GM12878 (cell line): ENCODE measurements at regions of chr4 and their contacts with region 1.

Region 1: DNA sequence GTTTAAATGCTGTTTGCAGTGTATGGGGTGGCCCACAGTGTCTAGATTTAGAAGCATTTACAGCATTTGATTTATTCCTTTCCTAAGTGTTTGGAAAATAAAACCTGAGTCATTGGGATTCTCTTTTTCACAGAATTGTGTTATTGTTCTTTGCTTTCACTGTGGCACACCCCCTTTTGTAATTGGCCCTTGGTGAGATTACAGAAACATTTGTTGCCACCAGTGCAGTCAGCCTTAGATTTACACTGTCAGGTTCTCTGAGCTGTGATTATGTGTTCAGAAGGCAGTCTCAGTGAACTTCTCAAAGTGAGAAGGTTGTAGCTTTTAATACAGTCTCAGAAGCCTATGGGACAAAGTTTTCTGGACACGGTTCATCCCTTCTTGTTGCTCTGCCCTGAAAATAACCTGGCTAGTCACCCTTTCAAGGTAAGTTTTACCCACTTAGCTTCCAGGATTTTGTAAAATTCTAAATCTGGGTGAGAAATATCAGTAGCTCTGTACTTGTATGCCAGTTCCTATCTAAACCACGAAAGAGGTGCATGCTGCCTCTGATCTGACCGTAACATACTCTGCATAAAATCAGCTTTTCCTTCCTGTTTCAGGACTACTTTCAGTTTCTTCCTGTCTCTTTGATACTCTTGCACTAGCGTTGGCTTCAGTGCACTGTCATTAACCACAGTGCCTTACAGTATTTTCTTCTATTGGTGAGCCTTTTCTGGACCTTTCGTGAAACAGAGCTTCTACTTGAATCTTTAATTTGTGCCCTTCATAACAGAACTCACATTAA is 12.6 kb downstream of the RUFY3 start:
- DNase-seq: peak; percentile 74
- ATAC-seq: peak; percentile 92
- H3K4me3 ChIP-seq: peak overlapping the region; percentile 62
- H3K27ac ChIP-seq: peak overlapping the region; percentile 49
- H3K4me1 ChIP-seq: peaks cover 30% of the 10 kb centered on the region
- H3K27me3 ChIP-seq: no peaks in the 10 kb centered on the region
- CTCF ChIP-seq: no peak
- EP300 ChIP-seq: 0 out of 4 replicates have a peak, but pooled peaks have one; percentile 1 to 14
- POLR2A ChIP-seq: no peak; the same call in 1 of the 2 replicates
- RAD21 ChIP-seq: no peak

Region 2: GRCh38 chr4:70687821-70688794 is 46.3 kb before region 1 on chr4 and contains the start of gene UTP3:
- CTCF ChIA-PET with region 1: interaction called, 58 read pairs
- POLR2A ChIA-PET with region 1: interaction called, 6 read pairs
- RAD21 ChIA-PET with region 1: interaction called, 40 read pairs
- SMC1A ChIA-PET with region 1: interaction called, 84 read pairs
- in situ Hi-C with region 1: no loop called
- intact Hi-C with region 1: no loop called
- DNase-seq: peak; percentile 95
- ATAC-seq: peak; percentile 93
- H3K4me3 ChIP-seq: peak within 1 kb of the TSS; percentile 90
- H3K27ac ChIP-seq: peak within 1 kb of the TSS; percentile 94
- H3K4me1 ChIP-seq: peaks cover 3% of the 10 kb centered on the region; the same call in 1 of the 2 replicates
- H3K27me3 ChIP-seq: no peaks in the 10 kb centered on the region
- CTCF ChIP-seq: peak; percentile 94 to 100 (median 97)
- EP300 ChIP-seq: no peak; a peak in 1 of 4 replicates
- POLR2A ChIP-seq: peak; percentile 89
- RAD21 ChIP-seq: peak; percentile 75
- polyA plus RNA-seq, gene UTP3: 15.8 to 21.1 TPM

Region 3: GRCh38 chr4:70721747-70722146 is 12.6 kb before region 1 on chr4 and contains the start of gene RUFY3:
- CTCF ChIA-PET with region 1: interaction called, 35 read pairs
- POLR2A ChIA-PET with region 1: interaction called, 6 read pairs
- RAD21 ChIA-PET with region 1: interaction called, 25 read pairs
- SMC1A ChIA-PET with region 1: interaction called, 65 read pairs
- in situ Hi-C with region 1: no loop called
- intact Hi-C with region 1: no loop called
- DNase-seq: no peak
- ATAC-seq: 0 out of 3 replicates have a peak, but pooled peaks have one; percentile 19
- H3K4me3 ChIP-seq: no peak within 1 kb of the TSS
- H3K27ac ChIP-seq: no peak within 1 kb of the TSS
- H3K4me1 ChIP-seq: no peaks in the 10 kb centered on the region
- H3K27me3 ChIP-seq: no peaks in the 10 kb centered on the region; a peak in 1 of 4 replicates
- CTCF ChIP-seq: no peak
- EP300 ChIP-seq: no peak
- POLR2A ChIP-seq: no peak
- RAD21 ChIP-seq: no peak
- polyA plus RNA-seq, gene RUFY3: 6.5 to 7.3 TPM

Region 4: DNA sequence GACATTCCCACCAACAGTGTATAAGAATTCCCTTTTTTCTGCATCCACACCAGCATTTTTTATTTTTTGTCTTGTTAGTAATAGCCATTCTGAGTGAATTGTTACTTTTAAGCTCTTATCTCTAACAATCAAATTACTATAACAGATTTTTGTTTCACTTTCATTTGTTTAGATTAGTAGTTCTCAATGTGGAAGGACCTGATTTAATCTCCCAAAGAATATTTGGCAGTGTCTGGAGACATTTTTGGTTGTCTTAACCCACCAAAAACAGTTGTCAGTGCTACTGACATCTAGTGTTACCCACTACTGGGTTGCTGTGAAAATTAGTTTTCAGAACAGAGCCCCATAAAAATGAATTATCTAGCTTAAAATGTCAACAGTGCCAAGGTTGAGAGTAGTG is 25.3 kb after region 1 on chr4:
- CTCF ChIA-PET with region 1: interaction called, 55 read pairs
- POLR2A ChIA-PET with region 1: interaction called, 24 read pairs
- RAD21 ChIA-PET with region 1: interaction called, 86 read pairs
- SMC1A ChIA-PET with region 1: interaction called, 204 read pairs
- in situ Hi-C with region 1: no loop called
- intact Hi-C with region 1: loop called (anchors 2 kb)
- DNase-seq: no peak
- ATAC-seq: no peak
- H3K4me3 ChIP-seq: no peak overlapping the region
- H3K27ac ChIP-seq: no peak overlapping the region
- H3K4me1 ChIP-seq: peaks cover 10% of the 10 kb centered on the region
- H3K27me3 ChIP-seq: no peaks in the 10 kb centered on the region
- CTCF ChIP-seq: no peak
- EP300 ChIP-seq: no peak
- POLR2A ChIP-seq: no peak
- RAD21 ChIP-seq: no peak

Region 5: DNA sequence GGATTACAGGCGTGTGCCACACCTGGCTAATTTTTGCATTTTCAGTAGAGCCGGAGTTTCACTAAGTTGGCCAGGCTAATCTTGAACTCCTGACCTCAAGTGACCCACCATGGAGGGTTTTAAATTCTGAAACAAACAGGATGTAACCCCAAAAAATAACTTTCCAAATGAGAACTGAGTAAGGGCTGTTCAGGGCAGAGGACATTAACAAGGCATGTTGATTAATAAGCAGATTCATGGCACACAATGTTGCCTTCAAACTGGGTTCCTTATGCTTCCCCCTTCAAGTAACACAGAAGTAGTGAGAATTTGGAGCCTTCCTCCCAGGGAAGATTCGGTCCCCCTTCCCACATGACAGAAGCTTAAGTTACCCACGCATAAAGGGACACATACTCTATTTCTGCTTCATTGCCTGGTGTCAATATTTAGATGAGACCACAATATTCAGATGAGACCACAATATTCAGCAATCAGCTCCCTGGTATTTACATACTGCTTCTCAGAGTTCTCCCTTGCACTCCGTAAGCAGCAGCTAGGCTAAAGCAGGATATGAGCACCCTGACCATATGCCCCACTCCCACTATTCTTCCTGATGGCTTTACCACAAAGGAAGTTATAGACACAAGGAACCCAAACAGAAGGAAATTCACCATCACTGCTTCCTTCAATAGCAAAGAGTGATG is 84.0 kb after region 1 on chr4:
- CTCF ChIA-PET with region 1: interaction called, 4 read pairs
- POLR2A ChIA-PET with region 1: interaction called, 3 read pairs
- RAD21 ChIA-PET with region 1: interaction called, 4 read pairs
- SMC1A ChIA-PET with region 1: interaction called, 11 read pairs
- in situ Hi-C with region 1: no loop called
- intact Hi-C with region 1: no loop called
- DNase-seq: no peak
- ATAC-seq: peak; percentile 57
- H3K4me3 ChIP-seq: no peak overlapping the region
- H3K27ac ChIP-seq: no peak overlapping the region
- H3K4me1 ChIP-seq: peaks cover 16% of the 10 kb centered on the region
- H3K27me3 ChIP-seq: no peaks in the 10 kb centered on the region
- CTCF ChIP-seq: no peak
- EP300 ChIP-seq: no peak
- POLR2A ChIP-seq: no peak
- RAD21 ChIP-seq: no peak

Region 6: DNA sequence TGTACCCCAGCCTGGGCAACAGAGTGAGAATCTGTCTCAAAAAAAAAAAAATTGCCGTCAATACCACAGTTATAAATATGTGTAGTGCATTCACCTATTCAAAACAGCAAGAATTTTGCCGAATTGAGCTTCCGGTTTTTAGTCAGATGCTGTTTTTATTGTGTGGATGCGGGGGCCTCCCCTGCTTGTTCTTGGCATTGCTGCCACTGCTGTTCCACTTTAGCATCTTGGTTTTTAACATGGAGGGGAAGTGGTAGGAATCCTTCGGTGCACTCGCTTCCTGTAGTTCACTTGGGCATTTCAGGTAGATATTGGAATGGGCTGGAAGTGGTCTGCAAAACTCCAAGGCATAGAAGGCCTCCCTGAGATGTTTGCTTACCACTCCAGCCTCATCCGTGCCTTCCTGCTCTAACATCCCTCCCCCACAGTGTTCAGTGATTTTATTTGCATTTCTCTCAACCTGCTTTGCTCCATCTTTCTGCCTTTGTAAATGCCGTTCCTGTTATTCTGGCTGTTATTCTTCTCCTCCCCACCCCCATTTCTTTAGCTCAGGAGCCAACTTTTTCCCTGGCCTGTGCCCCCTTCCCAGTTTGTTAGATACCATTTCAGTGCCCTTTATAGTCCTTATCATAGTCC is 193.3 kb after region 1 on chr4:
- CTCF ChIA-PET with region 1: interaction called, 4 read pairs
- POLR2A ChIA-PET with region 1: no interaction called
- RAD21 ChIA-PET with region 1: interaction called, 4 read pairs
- SMC1A ChIA-PET with region 1: interaction called, 9 read pairs
- in situ Hi-C with region 1: no loop called
- intact Hi-C with region 1: loop called (anchors 10 kb)
- DNase-seq: no peak
- ATAC-seq: peak; percentile 56
- H3K4me3 ChIP-seq: peak overlapping the region; percentile 43; the same call in 1 of the 2 replicates
- H3K27ac ChIP-seq: peak overlapping the region; percentile 54
- H3K4me1 ChIP-seq: peaks cover 36% of the 10 kb centered on the region
- H3K27me3 ChIP-seq: no peaks in the 10 kb centered on the region
- CTCF ChIP-seq: peak in 2 of 3 experiments; percentile 14 to 35; a peak in 3 of 6 replicates
- EP300 ChIP-seq: no peak
- POLR2A ChIP-seq: no peak
- RAD21 ChIP-seq: peak; percentile 36; the same call in 1 of the 2 replicates

Region 7: DNA sequence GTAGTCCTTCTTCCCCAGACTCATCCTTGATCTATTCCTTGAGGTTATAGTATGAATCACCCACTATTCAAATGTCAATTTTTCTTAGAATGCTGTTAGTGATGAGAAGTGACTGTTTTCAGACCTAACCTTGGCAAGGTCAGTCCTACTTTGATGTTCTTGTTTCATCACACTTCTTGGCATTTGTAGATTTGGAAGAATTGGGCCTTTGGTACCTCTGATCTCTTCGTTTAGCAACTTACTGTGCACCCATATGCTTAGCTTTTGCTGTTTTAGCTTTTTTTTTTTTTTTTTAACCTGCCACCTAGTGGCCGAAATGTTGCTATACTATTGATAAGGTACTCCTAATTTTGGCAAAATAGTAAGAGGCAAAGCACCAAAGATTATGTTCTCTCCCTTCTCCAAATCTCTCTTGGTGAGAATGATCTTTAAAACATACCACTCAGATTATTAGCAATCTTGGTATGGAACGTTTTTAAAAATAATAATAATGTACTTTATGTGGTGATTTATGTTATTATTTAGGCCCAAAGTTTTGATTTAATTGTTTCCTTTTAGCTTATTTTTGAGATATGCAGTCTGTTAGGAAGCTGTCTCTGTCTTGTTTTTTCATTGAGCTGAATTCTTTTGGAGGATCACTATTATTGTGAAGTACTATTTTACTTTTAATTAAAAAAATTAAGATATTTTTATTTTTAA is 275.7 kb after region 1 on chr4:
- CTCF ChIA-PET with region 1: interaction called, 28 read pairs
- POLR2A ChIA-PET with region 1: interaction called, 4 read pairs
- RAD21 ChIA-PET with region 1: interaction called, 18 read pairs
- SMC1A ChIA-PET with region 1: interaction called, 10 read pairs
- in situ Hi-C with region 1: no loop called
- intact Hi-C with region 1: no loop called
- DNase-seq: no peak
- ATAC-seq: peak; percentile 71
- H3K4me3 ChIP-seq: no peak overlapping the region
- H3K27ac ChIP-seq: no peak overlapping the region
- H3K4me1 ChIP-seq: peaks cover 8% of the 10 kb centered on the region
- H3K27me3 ChIP-seq: no peaks in the 10 kb centered on the region
- CTCF ChIP-seq: peak; percentile 47 to 61 (median 54); a peak in 5 of 6 replicates
- EP300 ChIP-seq: no peak
- POLR2A ChIP-seq: no peak
- RAD21 ChIP-seq: peak; percentile 62